ENCODE measurements at regions of chr12 and their contacts with region 1.

Region 1: GRCh38 chr12:71019282-71019831 is 98.8 kb upstream of the PTPRR start:
- DNase-seq: no peak
- H3K27ac ChIP-seq: no peak overlapping the region
- CTCF ChIP-seq: no peak

Region 2: DNA sequence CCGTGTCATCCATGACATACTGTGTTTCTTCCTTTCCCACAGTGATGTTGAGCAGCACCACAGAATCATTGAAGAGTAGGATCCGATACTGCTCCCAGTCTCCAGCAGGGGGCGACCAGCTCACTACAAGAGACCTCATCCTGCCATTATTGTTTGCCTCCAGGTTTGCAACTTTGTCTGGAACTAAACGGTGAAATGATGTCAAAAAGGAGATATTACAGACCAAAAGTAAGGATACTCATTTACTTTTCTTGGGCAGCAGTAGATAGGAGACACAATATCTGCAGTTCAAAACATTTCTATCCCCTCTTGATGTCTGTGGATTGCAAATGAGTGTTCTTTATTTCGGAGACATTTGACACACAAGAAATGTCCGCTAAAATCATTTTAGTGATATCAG is 429.3 kb before region 1 on chr12:
- CTCF ChIA-PET with region 1: no interaction called
- POLR2A ChIA-PET with region 1: interaction called, 10 read pairs
- DNase-seq: peak; percentile 64
- H3K27ac ChIP-seq: no peak overlapping the region
- CTCF ChIP-seq: peak; percentile 78

Region 3: DNA sequence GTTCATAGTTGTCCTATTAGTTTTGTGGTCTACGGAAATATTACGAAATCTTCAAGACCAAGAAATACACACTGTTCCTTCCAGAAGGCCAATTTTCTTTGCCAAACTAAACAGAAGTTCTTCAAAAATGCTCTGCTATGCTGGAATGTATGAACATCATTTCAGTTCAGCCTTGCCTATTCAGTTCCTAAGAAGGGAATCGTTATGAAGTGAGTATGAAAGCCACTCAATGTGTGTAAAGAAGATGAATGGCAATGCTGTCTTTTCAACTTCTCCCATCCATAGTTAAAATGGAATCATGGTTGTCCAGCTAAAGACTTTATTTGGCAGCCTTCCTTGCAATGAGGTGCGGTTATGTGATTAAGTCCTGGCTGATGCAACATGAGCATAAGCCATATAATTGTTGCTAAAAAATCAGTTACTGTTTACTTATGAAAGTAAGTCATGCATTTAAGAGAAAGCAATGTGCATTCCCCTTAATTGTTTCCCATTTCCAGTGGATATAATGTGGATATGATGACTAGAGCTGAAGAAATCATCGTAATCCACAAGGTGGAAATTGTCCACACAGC is 25.1 kb before region 1 on chr12:
- CTCF ChIA-PET with region 1: no interaction called
- POLR2A ChIA-PET with region 1: no interaction called
- DNase-seq: no peak
- H3K27ac ChIP-seq: peak overlapping the region; percentile 88
- CTCF ChIP-seq: no peak

Region 4: DNA sequence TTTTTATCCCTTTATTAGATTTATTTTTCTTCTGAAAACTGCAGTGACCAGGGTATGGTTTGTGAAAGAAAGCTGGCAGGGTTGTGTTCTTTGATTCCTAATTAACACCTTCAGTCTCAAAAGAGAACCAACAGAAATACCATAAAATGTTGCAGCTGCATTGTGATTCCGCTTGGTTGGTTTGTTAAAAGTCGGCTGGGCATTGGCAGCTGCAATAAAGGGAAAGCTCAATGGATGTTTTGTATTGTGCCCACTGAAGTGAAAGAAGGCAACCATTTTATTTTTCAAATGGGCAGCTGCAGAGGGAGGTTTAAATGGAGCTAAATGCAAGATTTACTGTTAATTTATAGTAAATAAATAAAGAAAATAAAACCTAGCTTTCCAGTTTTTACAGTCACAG is 437.0 kb after region 1 on chr12:
- CTCF ChIA-PET with region 1: no interaction called
- POLR2A ChIA-PET with region 1: no interaction called
- DNase-seq: no peak
- H3K27ac ChIP-seq: no peak overlapping the region
- CTCF ChIP-seq: no peak